ENCODE measurements at regions of chr17 and their contacts with region 1.

Region 1: GRCh38 chr17:77140166-77140878 is 447 bp upstream of the SEC14L1 start:
- DNase-seq: peak; percentile 96 to 100 (median 99)

Region 2: GRCh38 chr17:77088455-77089123 is 51.7 kb before region 1 on chr17:
- intact Hi-C with region 1: loop called (anchors 2 kb)
- DNase-seq: peak; percentile 85 to 98 (median 93)

Region 3: DNA sequence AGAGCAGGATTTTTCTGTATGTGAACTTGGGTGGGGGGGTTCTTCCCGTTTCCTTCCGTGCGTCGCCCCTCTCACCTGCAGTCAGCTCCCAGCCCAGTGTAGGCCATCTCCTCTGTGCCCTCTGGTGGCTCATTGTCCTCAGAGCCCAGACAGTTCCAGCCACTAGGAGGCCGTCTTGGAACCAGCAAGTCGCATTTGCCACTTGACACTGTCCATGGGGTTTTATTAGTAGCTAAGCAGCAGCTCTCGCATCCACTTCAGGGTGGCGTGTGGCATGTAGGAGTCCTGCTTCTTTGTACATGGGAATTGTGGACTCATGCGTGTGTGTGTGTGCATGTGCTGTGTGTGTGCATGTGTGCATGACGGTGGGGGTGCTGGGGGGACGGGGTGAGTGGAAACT is 74.4 kb after region 1 on chr17:
- intact Hi-C with region 1: loop called (anchors 5 kb)
- DNase-seq: peak in 7 of 10 donors; percentile 50 to 95 (median 61)

Region 4: GRCh38 chr17:77266891-77267341 is 126.6 kb after region 1 on chr17:
- intact Hi-C with region 1: no loop called
- DNase-seq: peak in 1 of 10 donors; percentile 57